Right cardiac atrium (tissue), 5 donors: ENCODE measurements at regions of chr9 and their contacts with region 1.

Region 1: DNA sequence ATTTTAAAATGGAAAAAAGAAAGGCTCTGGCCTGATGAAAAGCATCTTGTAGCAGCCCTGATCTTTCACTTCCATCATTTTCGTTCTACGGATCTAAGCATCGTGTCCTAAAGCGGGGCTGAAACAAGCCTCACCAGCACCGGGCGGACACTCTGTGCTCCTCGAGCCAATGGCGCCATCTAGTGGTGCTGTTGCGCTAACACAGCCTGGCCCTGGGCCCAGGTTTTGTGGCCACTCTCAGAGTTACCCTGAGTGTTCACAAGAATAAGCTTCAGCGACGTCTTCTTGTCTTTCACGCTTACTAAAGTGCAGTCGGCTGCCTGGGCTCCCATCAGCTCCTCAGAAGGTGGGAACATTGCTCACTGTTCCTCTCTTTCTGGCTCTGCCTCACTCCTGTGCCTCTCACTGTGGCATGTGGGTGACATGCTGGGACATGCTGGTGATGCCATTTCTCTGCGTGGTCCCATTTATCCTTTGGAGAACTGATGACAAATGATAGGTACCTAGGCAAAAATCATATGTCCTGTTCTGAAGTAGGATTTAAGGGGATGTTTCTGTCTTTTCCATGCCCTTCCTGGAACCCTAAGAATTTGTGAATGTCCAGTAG is 32.7 kb downstream of the DMRT3 start:
- DNase-seq: peak; percentile 74 to 92 (median 89)
- ATAC-seq: peak; percentile 94
- H3K4me3 ChIP-seq: no peak overlapping the region
- H3K27ac ChIP-seq: no peak overlapping the region
- H3K4me1 ChIP-seq: no peaks in the 10 kb centered on the region
- H3K27me3 ChIP-seq: no peaks in the 10 kb centered on the region

Region 2: DNA sequence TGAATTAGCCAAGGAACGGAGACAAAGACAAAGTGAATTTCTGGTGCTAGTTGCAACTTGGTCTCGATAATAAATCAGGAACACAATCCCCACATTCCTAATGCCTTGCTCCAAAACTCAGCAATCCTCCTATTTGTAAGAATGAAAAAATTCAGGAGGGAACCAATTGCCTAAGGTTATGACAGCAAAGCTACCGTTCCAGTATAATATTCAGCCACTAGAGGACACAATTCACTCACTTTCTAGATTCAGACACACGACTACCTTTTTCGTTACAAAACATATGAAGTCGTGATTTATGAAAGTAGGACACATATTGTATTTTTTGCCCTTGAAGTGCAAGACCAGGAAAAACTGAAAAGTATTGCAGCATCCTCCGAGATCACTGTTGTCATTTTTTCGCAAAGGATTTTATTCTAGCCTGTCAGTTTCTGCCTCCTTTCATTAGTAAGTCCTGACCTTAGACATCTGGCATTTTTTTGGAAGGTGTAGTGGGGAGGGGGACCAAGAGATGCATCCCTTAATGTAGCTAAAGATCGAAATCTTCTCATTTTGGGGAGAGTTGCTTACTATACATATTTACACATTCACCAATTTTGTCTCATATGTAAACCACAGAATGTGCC is 661.4 kb before region 1 on chr9:
- intact Hi-C with region 1: loop called in 1 of 4 experiments (anchors 10 kb)
- DNase-seq: no peak
- ATAC-seq: peak; percentile 48 to 59
- H3K4me3 ChIP-seq: no peak overlapping the region
- H3K27ac ChIP-seq: no peak overlapping the region
- H3K4me1 ChIP-seq: no peaks in the 10 kb centered on the region
- H3K27me3 ChIP-seq: no peaks in the 10 kb centered on the region

Region 3: GRCh38 chr9:893843-894420 is 115.3 kb before region 1 on chr9:
- intact Hi-C with region 1: loop called (anchors 5 to 10 kb)
- DNase-seq: peak; percentile 25 to 63 (median 55)
- ATAC-seq: peak; percentile 68 to 74
- H3K4me3 ChIP-seq: no peak overlapping the region
- H3K27ac ChIP-seq: no peak overlapping the region
- H3K4me1 ChIP-seq: no peaks in the 10 kb centered on the region
- H3K27me3 ChIP-seq: no peaks in the 10 kb centered on the region

Region 4: DNA sequence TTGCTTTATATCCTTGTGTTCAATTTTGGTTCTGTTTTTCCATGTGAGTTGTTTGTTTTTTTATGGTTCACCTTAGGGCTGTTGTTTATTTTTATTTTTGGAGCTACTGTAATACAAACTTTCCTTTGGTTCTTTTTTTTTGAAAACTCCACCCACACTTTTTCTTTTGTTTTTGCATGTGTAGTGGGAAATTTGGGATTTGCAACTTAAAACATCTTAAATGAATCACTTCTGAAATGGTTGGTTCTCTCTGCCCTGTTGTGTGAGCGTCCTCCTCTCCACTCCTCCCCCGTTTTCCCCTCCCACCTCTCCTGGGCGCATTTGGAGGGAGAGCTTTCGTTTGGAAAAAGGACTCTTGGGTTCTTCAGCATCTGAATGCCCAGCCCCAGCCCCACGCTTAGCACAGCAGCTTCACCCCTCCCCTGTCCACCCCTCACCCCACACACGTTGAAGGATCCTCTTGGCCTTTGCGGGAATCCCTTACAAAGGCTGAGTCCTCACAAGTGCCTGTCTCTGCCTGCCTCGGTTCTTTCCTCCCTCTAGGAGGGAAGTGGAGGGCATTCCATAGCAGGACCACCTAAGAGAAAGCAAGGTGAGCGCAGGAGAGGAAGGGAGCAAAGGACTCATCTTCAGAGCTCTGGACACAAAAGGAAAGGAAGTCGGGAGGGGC is 100.5 kb before region 1 on chr9:
- intact Hi-C with region 1: no loop called
- DNase-seq: no peak
- ATAC-seq: no peak
- H3K4me3 ChIP-seq: no peak overlapping the region
- H3K27ac ChIP-seq: no peak overlapping the region
- H3K4me1 ChIP-seq: no peaks in the 10 kb centered on the region
- H3K27me3 ChIP-seq: no peaks in the 10 kb centered on the region